ENCODE measurements at regions of chr11 and their contacts with region 1.

Region 1: GRCh38 chr11:108222686-108223448 is at the start of gene ATM:
- DNase-seq: peak; percentile 98
- H3K4me3 Mint-ChIP-seq: no peak within 1 kb of the TSS
- H3K27ac Mint-ChIP-seq: no peak within 1 kb of the TSS
- H3K4me1 Mint-ChIP-seq: peaks cover 35% of the 10 kb centered on the region
- H3K27me3 Mint-ChIP-seq: no peaks in the 10 kb centered on the region
- total RNA-seq, gene ATM: 37.3 and 39.7 TPM in 2 replicates

Region 2: DNA sequence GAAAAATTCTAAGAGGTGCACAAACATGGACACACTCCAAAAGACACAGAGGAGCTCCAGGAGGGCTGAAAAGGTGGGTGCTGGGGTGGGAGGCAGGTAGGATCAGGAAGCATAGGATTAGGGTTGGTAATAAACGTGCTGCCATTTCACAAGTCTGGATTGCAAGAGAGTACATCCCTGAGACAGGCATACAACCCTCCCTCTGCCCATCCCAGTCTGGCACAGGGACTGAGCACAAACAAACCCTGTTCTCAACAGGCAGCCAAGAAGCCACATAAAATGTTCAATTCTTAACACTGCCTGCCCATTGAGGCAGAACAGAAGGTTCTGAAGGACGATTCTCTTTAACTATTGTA is 382.8 kb before region 1 on chr11:
- intact Hi-C with region 1: loop called (anchors 2 kb)
- DNase-seq: no peak
- H3K4me3 Mint-ChIP-seq: peak overlapping the region; percentile 64
- H3K27ac Mint-ChIP-seq: peak overlapping the region; percentile 88
- H3K4me1 Mint-ChIP-seq: peaks cover 46% of the 10 kb centered on the region
- H3K27me3 Mint-ChIP-seq: no peaks in the 10 kb centered on the region

Region 3: DNA sequence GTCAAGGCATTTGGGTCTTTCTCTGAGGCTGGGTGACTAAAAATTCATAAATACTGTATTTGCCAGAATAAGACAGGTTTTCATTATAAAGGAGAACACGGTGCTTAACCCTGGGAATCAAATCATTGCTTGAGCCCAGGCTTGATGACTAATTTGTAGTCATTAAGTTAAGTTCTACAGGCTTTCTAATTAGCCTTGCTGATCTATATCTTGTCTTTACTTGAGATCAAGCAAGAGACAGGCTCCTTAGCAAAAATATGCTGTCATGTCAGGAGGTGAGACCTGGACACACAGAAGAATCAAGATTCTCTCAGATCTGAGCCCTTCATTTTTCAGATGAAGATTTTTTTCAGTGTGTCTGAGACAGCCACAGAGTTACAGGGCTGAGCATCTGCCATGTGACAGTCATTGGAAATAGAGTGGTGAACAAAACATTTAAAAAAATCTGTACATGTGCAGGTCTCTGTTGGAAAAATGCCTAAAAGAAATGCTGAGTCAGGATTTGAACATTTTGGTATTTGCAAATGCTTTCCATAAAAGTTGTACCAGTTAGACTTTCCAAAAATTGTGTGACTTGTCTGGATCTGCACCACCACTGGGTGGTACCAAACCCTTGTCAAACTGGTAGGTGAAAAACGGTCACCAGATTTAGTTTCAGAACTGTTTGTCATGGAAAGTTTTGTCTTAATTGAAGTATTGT is 86.9 kb before region 1 on chr11:
- intact Hi-C with region 1: loop called (anchors 1 kb)
- DNase-seq: no peak
- H3K4me3 Mint-ChIP-seq: no peak overlapping the region
- H3K27ac Mint-ChIP-seq: peak overlapping the region; percentile 52
- H3K4me1 Mint-ChIP-seq: peaks cover 16% of the 10 kb centered on the region
- H3K27me3 Mint-ChIP-seq: no peaks in the 10 kb centered on the region

Region 4: GRCh38 chr11:108467091-108467823 is 244.4 kb after region 1 on chr11 and contains the start of gene C11orf65:
- intact Hi-C with region 1: loop called (anchors 1 kb)
- DNase-seq: peak; percentile 94
- H3K4me3 Mint-ChIP-seq: peak within 1 kb of the TSS; percentile 98
- H3K27ac Mint-ChIP-seq: peak within 1 kb of the TSS; percentile 100
- H3K4me1 Mint-ChIP-seq: peaks cover 23% of the 10 kb centered on the region
- H3K27me3 Mint-ChIP-seq: peaks cover 3% of the 10 kb centered on the region
- total RNA-seq, gene C11orf65: 0.57 and 0.64 TPM in 2 replicates

Region 5: DNA sequence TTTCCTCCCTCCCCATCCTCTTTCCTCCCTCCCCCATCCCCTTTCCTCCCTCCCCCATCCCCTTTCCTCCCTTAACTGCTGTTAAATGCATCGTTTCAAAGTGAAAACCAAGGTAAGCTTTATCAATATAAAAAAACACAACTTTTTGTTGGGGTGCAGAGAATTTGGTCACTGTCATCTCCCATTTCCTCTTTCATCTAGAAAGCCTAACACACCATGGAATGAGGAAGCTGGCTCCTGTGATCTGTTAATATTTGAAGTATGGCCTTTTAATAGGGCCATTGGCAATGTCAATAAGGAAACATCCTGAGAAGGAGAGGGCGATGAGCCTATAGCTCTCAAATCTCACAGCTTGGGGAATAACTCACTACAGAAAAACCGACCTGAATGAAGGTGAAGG is 363.7 kb after region 1 on chr11:
- intact Hi-C with region 1: no loop called
- DNase-seq: no peak
- H3K4me3 Mint-ChIP-seq: no peak overlapping the region
- H3K27ac Mint-ChIP-seq: no peak overlapping the region
- H3K4me1 Mint-ChIP-seq: no peaks in the 10 kb centered on the region
- H3K27me3 Mint-ChIP-seq: no peaks in the 10 kb centered on the region

Region 6: DNA sequence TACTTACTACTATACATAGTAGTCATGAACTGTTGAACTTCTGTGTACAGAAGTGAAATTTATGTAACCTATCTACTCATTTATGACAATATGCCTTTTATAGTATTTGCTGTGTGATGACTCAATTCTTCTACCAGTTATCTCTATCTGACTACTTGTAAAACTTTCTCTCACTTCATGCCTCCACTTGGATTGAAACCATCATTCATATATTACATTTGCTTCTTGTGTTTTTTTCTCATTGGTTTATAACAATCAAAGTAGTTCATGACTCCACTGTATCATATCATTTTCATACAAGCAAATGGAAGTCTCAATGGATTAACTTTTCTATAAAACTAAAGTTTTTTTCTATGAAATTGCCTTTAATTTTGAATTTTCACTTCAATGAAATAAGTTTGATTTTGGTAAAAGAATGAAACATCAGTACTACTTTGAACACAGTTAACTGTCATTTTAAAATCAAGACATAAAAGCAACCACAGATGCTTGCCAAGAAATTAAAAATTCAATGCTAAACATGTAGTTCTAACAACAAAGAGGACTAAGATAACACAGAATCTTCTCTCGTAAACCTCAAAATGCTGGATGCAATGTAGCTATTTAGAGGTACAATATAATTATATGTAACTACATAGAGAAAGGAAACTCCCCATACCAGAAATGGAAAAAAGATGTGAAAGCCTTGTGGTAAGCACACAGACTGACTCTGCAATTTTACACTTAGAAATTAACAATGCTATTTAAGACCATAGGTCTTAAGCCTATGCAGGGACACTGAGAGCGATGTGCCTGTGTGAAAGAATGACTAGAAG is 398.3 kb after region 1 on chr11:
- intact Hi-C with region 1: loop called (anchors 1 kb)
- DNase-seq: no peak
- H3K4me3 Mint-ChIP-seq: no peak overlapping the region
- H3K27ac Mint-ChIP-seq: no peak overlapping the region
- H3K4me1 Mint-ChIP-seq: peaks cover 18% of the 10 kb centered on the region
- H3K27me3 Mint-ChIP-seq: peaks cover 7% of the 10 kb centered on the region